ENCODE measurements at regions of chr6 and their contacts with region 1.

Region 1: GRCh38 chr6:149140137-149140909 is 177.2 kb upstream of the TAB2 start:
- DNase-seq: peak; percentile 7 to 67 (median 27)
- ATAC-seq: peak; percentile 82
- H3K4me3 ChIP-seq: peak overlapping the region; percentile 14
- H3K4me3 Mint-ChIP-seq: peak overlapping the region; percentile 17 to 89 (median 78)
- H3K27ac ChIP-seq: peak overlapping the region; percentile 88
- H3K27ac Mint-ChIP-seq: peak overlapping the region in 8 of 9 donors; percentile 95 to 100 (median 98)
- H3K4me1 ChIP-seq: peaks cover 12 to 27% of the 10 kb centered on the region in 2 donors
- H3K4me1 Mint-ChIP-seq: peaks cover 20 to 61% (median 44%) of the 10 kb centered on the region in 7 donors
- H3K27me3 ChIP-seq: no peaks in the 10 kb centered on the region
- H3K27me3 Mint-ChIP-seq: no peaks in the 10 kb centered on the region

Region 2: GRCh38 chr6:149094156-149094555 is 46.2 kb before region 1 on chr6:
- CTCF ChIA-PET with region 1: no interaction called
- POLR2A ChIA-PET with region 1: interaction called, 4 read pairs
- intact Hi-C with region 1: loop called in 1 of 2 experiments (anchors 1 kb)
- DNase-seq: no peak
- ATAC-seq: no peak
- H3K4me3 ChIP-seq: no peak overlapping the region
- H3K4me3 Mint-ChIP-seq: peak overlapping the region; percentile 13 to 85 (median 66)
- H3K27ac ChIP-seq: peak overlapping the region; percentile 32
- H3K27ac Mint-ChIP-seq: peak overlapping the region; percentile 13 to 98 (median 82)
- H3K4me1 ChIP-seq: peaks cover 26 to 36% of the 10 kb centered on the region in 2 donors
- H3K4me1 Mint-ChIP-seq: peaks cover 25 to 75% (median 52%) of the 10 kb centered on the region in 7 donors
- H3K27me3 ChIP-seq: no peaks in the 10 kb centered on the region
- H3K27me3 Mint-ChIP-seq: no peaks in the 10 kb centered on the region

Region 3: DNA sequence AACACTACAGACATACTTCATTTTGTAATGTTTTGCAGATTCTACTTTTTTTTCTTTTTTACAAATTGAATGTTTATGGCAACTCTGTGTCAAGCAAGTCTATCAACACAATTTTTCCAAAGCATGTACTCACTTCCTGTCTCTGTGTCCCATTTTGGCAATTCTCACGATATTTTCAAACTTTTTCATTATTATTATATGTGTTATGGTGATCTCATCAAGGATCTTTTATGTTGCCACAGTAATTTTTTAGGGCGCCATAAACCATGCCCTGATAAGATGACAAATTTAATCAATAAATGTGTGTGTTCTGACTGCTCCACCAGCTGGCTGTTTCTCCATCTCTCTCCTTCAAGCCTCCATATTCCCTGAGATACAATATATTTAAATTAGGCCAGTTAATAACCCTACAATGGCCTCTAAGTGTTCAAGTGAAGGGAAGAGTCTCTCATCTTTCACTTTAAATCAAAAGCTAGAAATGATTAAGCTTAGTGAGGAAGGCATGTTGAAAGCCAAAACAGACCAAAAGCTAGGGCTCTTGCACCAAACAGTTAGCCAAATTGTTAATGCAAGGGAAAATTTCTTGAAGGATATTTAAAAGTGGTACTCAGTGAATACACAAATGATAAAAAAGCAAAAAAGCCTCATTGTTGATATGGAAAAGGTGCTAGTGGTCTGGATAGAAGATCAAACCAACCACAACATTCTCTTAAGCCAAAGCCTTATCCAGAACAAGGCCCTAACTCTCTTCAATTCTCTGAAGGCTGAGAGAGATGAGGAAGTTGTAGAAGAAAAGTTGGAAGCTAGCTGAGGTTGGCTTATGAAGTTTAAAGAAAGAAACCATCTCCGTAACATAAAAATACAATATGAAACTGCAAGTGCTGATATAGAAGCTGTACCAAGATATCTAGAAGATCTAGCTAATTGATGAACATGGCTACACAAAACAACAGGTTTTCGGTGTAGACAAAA is 17.2 kb before region 1 on chr6:
- CTCF ChIA-PET with region 1: no interaction called
- POLR2A ChIA-PET with region 1: interaction called, 30 read pairs
- intact Hi-C with region 1: loop called (anchors 1 kb)
- DNase-seq: no peak
- ATAC-seq: no peak
- H3K4me3 ChIP-seq: no peak overlapping the region
- H3K4me3 Mint-ChIP-seq: peak overlapping the region in 3 of 10 donors; percentile 39 to 51 (median 46)
- H3K27ac ChIP-seq: no peak overlapping the region
- H3K27ac Mint-ChIP-seq: peak overlapping the region in 7 of 9 donors; percentile 8 to 75 (median 41)
- H3K4me1 ChIP-seq: peaks cover 7 to 15% of the 10 kb centered on the region in 2 donors
- H3K4me1 Mint-ChIP-seq: peaks cover 14 to 78% (median 49%) of the 10 kb centered on the region in 7 donors
- H3K27me3 ChIP-seq: no peaks in the 10 kb centered on the region
- H3K27me3 Mint-ChIP-seq: no peaks in the 10 kb centered on the region

Region 4: GRCh38 chr6:149129371-149130077 is 10.8 kb before region 1 on chr6:
- CTCF ChIA-PET with region 1: interaction called, 7 read pairs
- POLR2A ChIA-PET with region 1: interaction called, 30 read pairs
- intact Hi-C with region 1: loop called (anchors 1 kb)
- DNase-seq: no peak
- ATAC-seq: peak; percentile 62
- H3K4me3 ChIP-seq: no peak overlapping the region
- H3K4me3 Mint-ChIP-seq: peak overlapping the region in 6 of 10 donors; percentile 2 to 66 (median 30)
- H3K27ac ChIP-seq: peak overlapping the region; percentile 45
- H3K27ac Mint-ChIP-seq: peak overlapping the region; percentile 76 to 99 (median 91)
- H3K4me1 ChIP-seq: peaks cover 28 to 47% of the 10 kb centered on the region in 2 donors
- H3K4me1 Mint-ChIP-seq: peaks cover 40 to 83% (median 79%) of the 10 kb centered on the region in 7 donors
- H3K27me3 ChIP-seq: no peaks in the 10 kb centered on the region
- H3K27me3 Mint-ChIP-seq: no peaks in the 10 kb centered on the region

Region 5: GRCh38 chr6:149166747-149167146 is 26.4 kb after region 1 on chr6:
- CTCF ChIA-PET with region 1: no interaction called
- POLR2A ChIA-PET with region 1: interaction called, 3 read pairs
- intact Hi-C with region 1: loop called in 1 of 2 experiments (anchors 2 kb)
- DNase-seq: peak in 2 of 9 donors; percentile 19 to 20
- ATAC-seq: no peak
- H3K4me3 ChIP-seq: no peak overlapping the region
- H3K4me3 Mint-ChIP-seq: peak overlapping the region; percentile 27 to 76 (median 59)
- H3K27ac ChIP-seq: peak overlapping the region; percentile 43
- H3K27ac Mint-ChIP-seq: peak overlapping the region; percentile 35 to 91 (median 65)
- H3K4me1 ChIP-seq: peaks cover 12 to 26% of the 10 kb centered on the region in 2 donors
- H3K4me1 Mint-ChIP-seq: peaks cover 18 to 58% (median 34%) of the 10 kb centered on the region in 7 donors
- H3K27me3 ChIP-seq: no peaks in the 10 kb centered on the region
- H3K27me3 Mint-ChIP-seq: no peaks in the 10 kb centered on the region

Region 6: GRCh38 chr6:149211046-149211571 is 70.8 kb after region 1 on chr6:
- CTCF ChIA-PET with region 1: no interaction called
- POLR2A ChIA-PET with region 1: no interaction called
- intact Hi-C with region 1: loop called in 1 of 2 experiments (anchors 2 kb)
- DNase-seq: peak in 1 of 9 donors; percentile 34
- ATAC-seq: peak; percentile 71
- H3K4me3 ChIP-seq: no peak overlapping the region
- H3K4me3 Mint-ChIP-seq: peak overlapping the region in 8 of 10 donors; percentile 15 to 70 (median 46)
- H3K27ac ChIP-seq: no peak overlapping the region
- H3K27ac Mint-ChIP-seq: peak overlapping the region in 5 of 9 donors; percentile 17 to 91 (median 59)
- H3K4me1 ChIP-seq: peaks cover 26 to 34% of the 10 kb centered on the region in 2 donors
- H3K4me1 Mint-ChIP-seq: peaks cover 6 to 28% (median 14%) of the 10 kb centered on the region in 7 donors
- H3K27me3 ChIP-seq: no peaks in the 10 kb centered on the region
- H3K27me3 Mint-ChIP-seq: no peaks in the 10 kb centered on the region

Region 7: GRCh38 chr6:149499066-149499465 is 358.7 kb after region 1 on chr6:
- CTCF ChIA-PET with region 1: no interaction called
- POLR2A ChIA-PET with region 1: no interaction called
- intact Hi-C with region 1: loop called in 1 of 2 experiments (anchors 1 kb)
- DNase-seq: no peak
- ATAC-seq: no peak
- H3K4me3 ChIP-seq: no peak overlapping the region
- H3K4me3 Mint-ChIP-seq: no peak overlapping the region
- H3K27ac ChIP-seq: no peak overlapping the region
- H3K27ac Mint-ChIP-seq: peak overlapping the region in 8 of 9 donors; percentile 14 to 100 (median 80)
- H3K4me1 ChIP-seq: peaks cover 12 to 33% of the 10 kb centered on the region in 2 donors
- H3K4me1 Mint-ChIP-seq: peaks cover 18 to 68% (median 58%) of the 10 kb centered on the region in 7 donors
- H3K27me3 ChIP-seq: no peaks in the 10 kb centered on the region
- H3K27me3 Mint-ChIP-seq: no peaks in the 10 kb centered on the region

Region 8: DNA sequence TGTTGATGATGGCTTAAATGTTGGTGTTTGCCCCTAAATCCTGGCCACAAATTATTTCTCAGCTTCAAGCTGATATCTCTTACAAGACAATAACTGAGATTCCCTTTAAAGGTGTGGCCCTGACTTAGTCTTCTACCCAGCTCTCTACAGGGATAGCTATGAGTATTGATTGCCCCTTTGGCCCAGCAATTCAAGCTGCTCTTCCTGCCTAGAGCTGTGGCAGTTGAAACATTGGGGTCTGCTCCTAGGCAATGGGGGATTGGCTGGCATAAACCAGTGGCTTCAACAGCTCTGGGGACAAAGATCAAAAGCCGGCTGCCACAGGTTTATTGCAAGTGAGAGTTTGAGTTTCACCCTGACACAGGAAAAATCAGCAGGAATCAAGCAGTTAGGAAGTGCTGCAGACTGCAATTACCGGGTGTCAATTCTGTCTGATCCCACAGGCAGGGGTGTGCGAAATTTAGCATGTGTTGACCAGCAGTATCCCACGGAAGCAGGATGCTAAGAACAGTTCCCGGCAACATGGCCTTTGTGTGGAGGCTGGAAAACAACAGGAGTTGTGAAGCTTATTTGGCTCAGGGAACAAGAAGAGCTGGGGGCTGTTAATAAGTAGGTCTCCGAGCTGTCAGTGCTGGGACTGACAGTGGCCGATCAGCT is 1162.3 kb after region 1 on chr6:
- CTCF ChIA-PET with region 1: no interaction called
- POLR2A ChIA-PET with region 1: no interaction called
- intact Hi-C with region 1: no loop called
- DNase-seq: no peak
- ATAC-seq: no peak
- H3K4me3 ChIP-seq: no peak overlapping the region
- H3K4me3 Mint-ChIP-seq: no peak overlapping the region
- H3K27ac ChIP-seq: no peak overlapping the region
- H3K27ac Mint-ChIP-seq: no peak overlapping the region
- H3K4me1 ChIP-seq: no peaks in the 10 kb centered on the region
- H3K4me1 Mint-ChIP-seq: peaks cover 0 to 5% (median 0%) of the 10 kb centered on the region in 7 donors
- H3K27me3 ChIP-seq: no peaks in the 10 kb centered on the region
- H3K27me3 Mint-ChIP-seq: peaks cover 11 to 18% (median 15%) of the 10 kb centered on the region in 5 donors